Activated naive CD4-positive, alpha-beta T cell treated with anti-CD3 and anti-CD28 coated beads for 36 hours (primary cell): ENCODE measurements at regions of chr6 and their contacts with region 1.

Region 1: DNA sequence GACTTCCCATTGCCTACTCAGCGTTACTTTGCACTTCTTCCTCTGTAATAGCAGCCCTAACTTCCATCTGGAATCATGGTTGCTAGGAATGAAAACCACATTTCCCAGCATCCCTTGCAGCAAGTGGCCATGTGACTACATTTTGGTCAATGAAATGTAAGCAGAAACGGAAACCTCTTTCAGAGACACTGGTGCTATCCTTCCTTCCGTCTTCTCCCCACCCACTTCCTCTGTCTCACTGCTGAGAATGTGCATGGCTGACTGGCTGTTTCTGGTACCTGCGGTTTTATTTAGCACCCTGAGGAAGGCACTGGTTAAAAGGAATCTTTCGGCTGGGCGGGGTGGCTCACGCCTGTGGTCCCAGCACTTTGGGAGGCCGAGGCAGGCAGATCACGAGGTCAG is 107.4 kb downstream of the SCML4 start:
- DNase-seq: peak; percentile 89
- H3K4me3 Mint-ChIP-seq: peak overlapping the region; percentile 71
- H3K27ac Mint-ChIP-seq: peak overlapping the region; percentile 93
- H3K4me1 Mint-ChIP-seq: peaks cover 65% of the 10 kb centered on the region
- H3K27me3 Mint-ChIP-seq: no peaks in the 10 kb centered on the region

Region 2: GRCh38 chr6:107330168-107330567 is 386.5 kb before region 1 on chr6:
- CTCF ChIA-PET with region 1: no interaction called
- intact Hi-C with region 1: loop called (anchors 2 kb)
- DNase-seq: peak; percentile 68
- H3K4me3 Mint-ChIP-seq: peak overlapping the region; percentile 33
- H3K27ac Mint-ChIP-seq: peak overlapping the region; percentile 61
- H3K4me1 Mint-ChIP-seq: peaks cover 13% of the 10 kb centered on the region
- H3K27me3 Mint-ChIP-seq: no peaks in the 10 kb centered on the region

Region 3: DNA sequence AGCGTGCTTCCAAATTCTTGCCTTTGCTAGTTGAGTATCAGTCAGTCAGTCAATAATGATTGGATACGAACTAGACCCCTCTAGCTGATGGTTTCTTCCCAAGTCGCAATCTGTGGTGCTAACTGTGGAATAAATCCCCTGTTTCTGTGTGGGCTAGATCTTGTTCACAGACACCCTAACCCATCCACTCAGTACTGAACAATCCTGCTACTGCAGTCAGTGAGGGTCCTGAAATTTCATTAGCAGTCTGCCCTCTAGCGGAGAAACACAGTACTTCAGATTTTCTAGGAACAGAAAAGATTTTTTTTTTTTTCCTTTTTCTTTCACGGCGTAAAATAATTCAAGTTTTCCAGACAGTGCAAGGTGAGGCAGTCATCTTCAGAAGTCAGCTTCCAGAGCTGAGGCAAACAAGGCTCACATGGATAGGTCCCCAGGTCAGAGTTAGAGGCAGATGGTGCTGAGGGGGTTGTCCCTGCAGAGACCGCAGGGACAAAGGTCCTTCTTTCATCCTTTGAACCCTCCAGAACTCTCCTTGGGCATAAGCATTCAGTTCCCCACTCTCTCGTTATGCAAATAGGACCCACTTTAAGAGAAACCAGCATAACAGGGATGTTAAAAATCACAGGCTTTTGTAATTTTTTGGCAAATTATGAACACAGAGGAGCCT is 12.2 kb before region 1 on chr6:
- CTCF ChIA-PET with region 1: interaction called, 19 read pairs
- intact Hi-C with region 1: loop called (anchors 1 kb)
- DNase-seq: no peak
- H3K4me3 Mint-ChIP-seq: no peak overlapping the region
- H3K27ac Mint-ChIP-seq: no peak overlapping the region
- H3K4me1 Mint-ChIP-seq: peaks cover 19% of the 10 kb centered on the region
- H3K27me3 Mint-ChIP-seq: no peaks in the 10 kb centered on the region

Region 4: DNA sequence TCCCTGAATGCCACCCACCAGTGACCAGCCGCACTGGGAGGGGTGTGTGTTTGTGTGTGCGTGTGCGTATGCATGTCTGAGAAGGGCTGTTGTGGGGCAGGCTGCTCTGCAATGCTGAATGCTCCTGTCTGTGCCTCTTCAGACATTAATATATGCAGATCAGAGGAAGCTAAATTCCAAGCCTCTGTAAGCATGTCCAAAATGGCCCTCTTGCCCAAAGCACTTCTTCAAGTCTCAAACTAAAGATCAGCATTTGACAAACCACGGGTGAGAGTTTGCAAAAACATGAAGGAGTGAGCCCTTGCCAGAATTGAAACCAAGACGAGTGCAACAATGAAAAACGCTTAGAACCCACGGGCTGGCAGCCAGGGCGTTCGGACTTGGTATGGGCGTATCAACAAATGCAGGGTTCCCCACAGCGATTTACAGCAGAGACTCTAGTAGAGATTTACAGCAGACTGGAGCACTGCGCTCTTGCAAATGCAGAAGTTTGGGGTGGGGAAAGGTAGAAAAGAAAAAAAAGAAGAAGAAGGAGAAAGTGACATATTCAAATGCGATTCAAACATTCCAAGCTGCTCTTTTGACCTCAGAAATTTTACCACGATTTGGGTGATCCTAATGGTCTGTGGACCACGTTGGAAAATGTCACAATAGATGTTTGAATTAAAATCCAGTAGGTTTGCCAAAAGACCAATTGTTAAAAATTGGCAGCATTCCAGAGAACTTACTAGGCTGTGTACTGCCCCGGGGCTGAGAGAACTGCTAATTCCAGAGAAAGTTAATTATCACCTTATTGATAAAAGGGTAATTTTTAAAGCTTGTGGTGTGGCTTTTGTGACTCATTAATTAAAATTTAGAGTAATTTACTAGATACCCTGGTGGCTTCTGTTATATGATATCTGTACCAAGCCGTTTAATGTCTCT is 103.9 kb after region 1 on chr6:
- CTCF ChIA-PET with region 1: no interaction called
- intact Hi-C with region 1: loop called (anchors 1 kb)
- DNase-seq: peak; percentile 55
- H3K4me3 Mint-ChIP-seq: peak overlapping the region; percentile 88
- H3K27ac Mint-ChIP-seq: peak overlapping the region; percentile 98
- H3K4me1 Mint-ChIP-seq: peaks cover 83% of the 10 kb centered on the region
- H3K27me3 Mint-ChIP-seq: no peaks in the 10 kb centered on the region

Region 5: DNA sequence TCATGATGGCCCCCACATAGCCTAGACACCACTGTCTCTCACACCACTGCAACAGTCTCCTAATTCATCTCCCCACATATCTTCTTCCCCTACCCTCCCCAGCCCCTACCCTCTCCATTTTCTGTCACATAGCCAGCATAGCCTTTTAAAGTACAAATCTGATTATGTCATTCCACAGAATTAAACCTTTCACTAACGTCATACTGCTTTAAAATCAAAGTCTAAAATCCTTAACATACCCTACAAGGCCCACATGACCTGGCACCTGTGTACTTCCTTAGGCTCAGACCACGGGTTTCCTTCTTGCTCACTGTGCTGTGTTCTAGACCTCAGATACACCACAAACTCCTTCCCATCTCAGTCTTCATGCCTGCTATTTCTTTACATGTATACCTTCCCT is 351.9 kb after region 1 on chr6:
- CTCF ChIA-PET with region 1: no interaction called
- intact Hi-C with region 1: loop called (anchors 2 kb)
- DNase-seq: peak; percentile 74
- H3K4me3 Mint-ChIP-seq: no peak overlapping the region
- H3K27ac Mint-ChIP-seq: no peak overlapping the region
- H3K4me1 Mint-ChIP-seq: peaks cover 16% of the 10 kb centered on the region
- H3K27me3 Mint-ChIP-seq: no peaks in the 10 kb centered on the region